Panc1 (cell line): ENCODE measurements at regions of chr2 and their contacts with region 1.

Region 1: DNA sequence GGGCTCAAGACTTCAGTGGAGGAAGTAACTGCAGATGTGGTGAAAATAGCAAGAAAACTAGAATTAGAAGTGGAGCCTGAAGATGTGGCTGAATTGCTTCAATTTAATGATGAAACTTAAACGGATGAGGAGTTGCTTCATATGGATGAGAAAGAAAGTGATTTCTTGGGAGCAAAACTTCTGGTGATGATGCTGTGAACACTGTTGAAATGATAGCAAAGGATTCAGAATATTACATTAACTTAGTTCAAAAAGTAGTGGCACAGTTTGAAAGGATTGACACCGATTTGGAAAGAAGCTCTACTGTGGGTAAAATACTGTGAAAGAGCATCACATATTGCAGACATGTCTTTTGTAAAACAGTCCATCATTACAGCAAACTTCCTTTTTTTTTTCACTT is 638.0 kb downstream of the NYAP2 start:
- DNase-seq: no peak
- ATAC-seq: no peak
- H3K4me3 ChIP-seq: no peak overlapping the region
- H3K27ac ChIP-seq: no peak overlapping the region
- H3K4me1 ChIP-seq: peaks cover 2% of the 10 kb centered on the region
- H3K27me3 ChIP-seq: no peaks in the 10 kb centered on the region
- CTCF ChIP-seq: no peak

Region 2: DNA sequence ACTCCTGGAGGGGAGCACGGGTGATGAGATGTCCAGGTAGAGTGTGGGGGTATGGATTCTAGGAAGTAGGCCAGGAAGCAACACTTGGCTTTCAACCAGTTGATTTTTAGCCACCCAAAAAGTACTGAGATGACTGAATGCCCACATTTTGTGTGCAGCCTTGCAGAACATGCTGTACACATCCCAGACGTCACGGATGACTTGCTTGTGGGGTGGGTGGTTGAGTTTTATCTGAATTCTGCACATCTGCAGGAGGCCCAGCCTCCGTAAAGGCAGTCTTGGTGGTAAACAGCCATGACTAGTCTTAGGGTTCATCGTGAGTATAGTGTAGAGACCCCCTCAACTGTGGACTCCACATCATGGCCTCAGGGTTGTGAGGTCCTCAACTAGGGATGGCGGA is 1268.0 kb before region 1 on chr2:
- CTCF ChIA-PET with region 1: interaction called, 14 read pairs
- POLR2A ChIA-PET with region 1: no interaction called
- in situ Hi-C with region 1: no loop called
- intact Hi-C with region 1: no loop called
- DNase-seq: no peak
- ATAC-seq: no peak
- H3K4me3 ChIP-seq: no peak overlapping the region
- H3K27ac ChIP-seq: no peak overlapping the region
- H3K4me1 ChIP-seq: no peaks in the 10 kb centered on the region; the same call in 1 of the 2 replicates
- H3K27me3 ChIP-seq: no peaks in the 10 kb centered on the region
- CTCF ChIP-seq: no peak

Region 3: DNA sequence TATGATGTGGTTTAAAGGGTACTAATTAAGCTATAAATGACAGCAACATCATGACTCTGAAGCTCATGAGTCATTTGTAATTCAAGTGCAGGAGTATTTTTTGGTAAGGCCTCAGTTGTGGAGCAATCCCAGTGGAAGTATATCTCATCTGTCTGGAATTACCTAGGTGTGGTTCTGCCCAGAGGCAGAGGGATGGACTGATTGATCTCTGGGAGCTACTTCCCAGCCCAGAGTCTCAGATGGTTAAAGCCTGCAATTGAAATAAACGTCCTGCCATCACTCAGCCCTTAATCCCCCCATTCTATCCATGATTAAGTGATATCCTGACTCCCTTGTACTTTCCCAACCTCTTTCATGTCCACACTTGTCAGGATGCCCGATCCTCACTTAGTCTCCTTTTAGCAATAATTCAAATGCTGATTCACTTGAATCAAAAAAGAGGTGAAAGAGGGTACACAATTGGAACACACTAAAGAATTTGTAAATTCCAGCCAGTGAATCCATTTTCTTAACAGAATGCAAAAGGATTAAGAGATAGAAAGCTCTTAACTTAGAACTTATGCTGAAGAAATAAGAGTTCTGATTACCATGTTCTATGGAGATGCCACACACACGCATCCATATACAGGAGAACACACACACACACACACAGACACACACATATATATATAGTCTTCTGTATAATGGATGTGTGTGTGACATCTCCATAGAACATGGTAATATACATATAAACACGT is 26.3 kb after region 1 on chr2:
- CTCF ChIA-PET with region 1: no interaction called
- POLR2A ChIA-PET with region 1: no interaction called
- in situ Hi-C with region 1: no loop called
- intact Hi-C with region 1: no loop called
- DNase-seq: no peak
- ATAC-seq: no peak
- H3K4me3 ChIP-seq: no peak overlapping the region
- H3K27ac ChIP-seq: no peak overlapping the region
- H3K4me1 ChIP-seq: no peaks in the 10 kb centered on the region
- H3K27me3 ChIP-seq: no peaks in the 10 kb centered on the region
- CTCF ChIP-seq: no peak